GM12878 (cell line): ENCODE measurements at regions of chr21 and their contacts with region 1.

Region 1: GRCh38 chr21:14454016-14455009 is 71.4 kb upstream of the HSPA13 start:
- DNase-seq: peak; percentile 69
- ATAC-seq: peak; percentile 82
- H3K4me3 ChIP-seq: 0 out of 2 replicates have a peak overlapping the region, but pooled peaks have one; percentile 13
- H3K27ac ChIP-seq: peak overlapping the region; percentile 96
- H3K4me1 ChIP-seq: peaks cover 34% of the 10 kb centered on the region
- H3K27me3 ChIP-seq: no peaks in the 10 kb centered on the region
- CTCF ChIP-seq: no peak
- EP300 ChIP-seq: peak in 1 of 2 experiments; percentile 35; a peak in 2 of 4 replicates
- POLR2A ChIP-seq: 0 out of 2 replicates have a peak, but pooled peaks have one; percentile 20
- RAD21 ChIP-seq: no peak

Region 2: DNA sequence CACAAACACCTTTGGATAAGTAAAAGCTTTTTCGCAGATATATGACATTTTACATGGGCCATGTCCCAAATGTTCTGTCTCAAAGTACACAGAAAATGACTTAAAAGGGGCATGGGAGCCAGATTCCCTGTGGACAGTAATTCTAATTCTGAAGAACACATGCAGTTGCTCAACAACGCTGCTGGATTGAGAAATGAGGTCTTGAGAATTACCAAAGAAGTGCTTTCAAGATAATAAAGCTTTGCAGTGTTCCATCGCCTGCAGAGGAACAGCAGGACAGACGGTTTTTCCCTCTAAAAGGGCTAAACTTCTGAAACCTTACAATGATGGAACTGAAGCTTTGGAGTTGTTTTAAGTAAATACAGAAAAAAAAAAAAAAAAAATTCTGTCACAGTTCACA is 16.1 kb before region 1 on chr21:
- CTCF ChIA-PET with region 1: interaction called, 3 read pairs
- POLR2A ChIA-PET with region 1: no interaction called
- RAD21 ChIA-PET with region 1: interaction called, 6 read pairs
- SMC1A ChIA-PET with region 1: interaction called, 13 read pairs
- in situ Hi-C with region 1: no loop called
- intact Hi-C with region 1: no loop called
- DNase-seq: no peak
- ATAC-seq: no peak
- H3K4me3 ChIP-seq: no peak overlapping the region
- H3K27ac ChIP-seq: no peak overlapping the region
- H3K4me1 ChIP-seq: no peaks in the 10 kb centered on the region
- H3K27me3 ChIP-seq: no peaks in the 10 kb centered on the region
- CTCF ChIP-seq: no peak
- EP300 ChIP-seq: no peak
- POLR2A ChIP-seq: no peak
- RAD21 ChIP-seq: no peak

Region 3: DNA sequence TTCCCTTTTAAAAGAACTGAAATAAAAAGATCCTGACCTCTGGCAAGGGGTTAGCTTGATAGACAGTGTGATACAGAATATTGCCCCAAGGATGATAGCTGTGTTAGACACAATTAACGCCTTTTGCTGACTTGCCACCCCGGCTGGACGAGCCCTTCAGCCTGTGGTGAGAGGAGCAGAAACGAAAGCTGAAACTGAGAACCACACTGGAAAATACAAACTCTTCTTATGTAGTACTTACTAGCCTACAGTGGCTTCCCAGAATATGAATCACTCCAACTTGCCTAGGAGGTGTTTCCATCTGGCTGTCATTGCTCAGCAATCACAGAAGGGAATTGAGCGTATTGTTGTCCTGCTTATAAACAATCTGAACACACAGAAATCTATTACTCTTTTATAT is 68.9 kb after region 1 on chr21:
- CTCF ChIA-PET with region 1: interaction called, 9 read pairs
- POLR2A ChIA-PET with region 1: interaction called, 4 read pairs
- RAD21 ChIA-PET with region 1: interaction called, 60 read pairs
- SMC1A ChIA-PET with region 1: interaction called, 75 read pairs
- in situ Hi-C with region 1: no loop called
- intact Hi-C with region 1: no loop called
- DNase-seq: no peak
- ATAC-seq: peak; percentile 87
- H3K4me3 ChIP-seq: peak overlapping the region; percentile 29; the same call in 1 of the 2 replicates
- H3K27ac ChIP-seq: peak overlapping the region; percentile 50
- H3K4me1 ChIP-seq: peaks cover 32% of the 10 kb centered on the region
- H3K27me3 ChIP-seq: no peaks in the 10 kb centered on the region
- CTCF ChIP-seq: no peak
- EP300 ChIP-seq: no peak; a peak in 1 of 4 replicates
- POLR2A ChIP-seq: no peak
- RAD21 ChIP-seq: no peak

Region 4: GRCh38 chr21:14554948-14555347 is 100.6 kb after region 1 on chr21:
- CTCF ChIA-PET with region 1: interaction called, 3 read pairs
- POLR2A ChIA-PET with region 1: interaction called, 5 read pairs
- RAD21 ChIA-PET with region 1: interaction called, 35 read pairs
- SMC1A ChIA-PET with region 1: interaction called, 44 read pairs
- in situ Hi-C with region 1: no loop called
- intact Hi-C with region 1: no loop called
- DNase-seq: no peak
- ATAC-seq: peak; percentile 28; the same call in 1 of the 3 replicates
- H3K4me3 ChIP-seq: no peak overlapping the region
- H3K27ac ChIP-seq: no peak overlapping the region
- H3K4me1 ChIP-seq: peaks cover 19% of the 10 kb centered on the region
- H3K27me3 ChIP-seq: no peaks in the 10 kb centered on the region
- CTCF ChIP-seq: no peak
- EP300 ChIP-seq: no peak
- POLR2A ChIP-seq: no peak
- RAD21 ChIP-seq: no peak

Region 5: GRCh38 chr21:14602382-14602958 is 148.2 kb after region 1 on chr21:
- CTCF ChIA-PET with region 1: no interaction called
- POLR2A ChIA-PET with region 1: no interaction called
- RAD21 ChIA-PET with region 1: interaction called, 4 read pairs
- SMC1A ChIA-PET with region 1: interaction called, 15 read pairs
- in situ Hi-C with region 1: no loop called
- intact Hi-C with region 1: no loop called
- DNase-seq: no peak
- ATAC-seq: peak; percentile 90
- H3K4me3 ChIP-seq: peak overlapping the region; percentile 18; the same call in 1 of the 2 replicates
- H3K27ac ChIP-seq: no peak overlapping the region
- H3K4me1 ChIP-seq: peaks cover 3% of the 10 kb centered on the region; the same call in 1 of the 2 replicates
- H3K27me3 ChIP-seq: no peaks in the 10 kb centered on the region
- CTCF ChIP-seq: no peak
- EP300 ChIP-seq: no peak
- POLR2A ChIP-seq: no peak
- RAD21 ChIP-seq: no peak

Region 6: DNA sequence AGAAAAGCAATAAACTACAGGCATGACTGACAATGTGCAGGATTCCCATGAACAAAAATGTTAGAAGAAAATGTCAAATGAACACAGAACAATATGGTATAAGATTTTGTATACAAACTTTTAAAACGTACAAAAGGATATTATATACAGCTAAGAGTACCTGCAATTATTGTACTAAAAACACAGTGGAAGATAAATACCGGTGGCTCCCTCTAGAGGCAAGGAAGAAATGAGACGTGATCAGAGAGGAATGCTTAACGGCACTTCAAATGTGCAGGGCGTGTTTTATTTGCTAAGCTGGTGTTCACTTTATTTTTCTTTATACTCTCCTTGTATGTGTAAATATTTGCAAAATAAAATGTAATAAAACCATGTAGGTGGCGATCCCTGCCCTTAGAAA is 283.6 kb after region 1 on chr21:
- CTCF ChIA-PET with region 1: interaction called, 46 read pairs
- POLR2A ChIA-PET with region 1: interaction called, 4 read pairs
- RAD21 ChIA-PET with region 1: interaction called, 61 read pairs
- SMC1A ChIA-PET with region 1: interaction called, 93 read pairs
- in situ Hi-C with region 1: no loop called
- intact Hi-C with region 1: loop called (anchors 1 kb)
- DNase-seq: no peak
- ATAC-seq: peak; percentile 81
- H3K4me3 ChIP-seq: no peak overlapping the region
- H3K27ac ChIP-seq: peak overlapping the region; percentile 20; the same call in 1 of the 2 replicates
- H3K4me1 ChIP-seq: peaks cover 23% of the 10 kb centered on the region
- H3K27me3 ChIP-seq: no peaks in the 10 kb centered on the region
- CTCF ChIP-seq: peak; percentile 51 to 65 (median 61)
- EP300 ChIP-seq: no peak
- POLR2A ChIP-seq: no peak
- RAD21 ChIP-seq: peak; percentile 86

Region 7: DNA sequence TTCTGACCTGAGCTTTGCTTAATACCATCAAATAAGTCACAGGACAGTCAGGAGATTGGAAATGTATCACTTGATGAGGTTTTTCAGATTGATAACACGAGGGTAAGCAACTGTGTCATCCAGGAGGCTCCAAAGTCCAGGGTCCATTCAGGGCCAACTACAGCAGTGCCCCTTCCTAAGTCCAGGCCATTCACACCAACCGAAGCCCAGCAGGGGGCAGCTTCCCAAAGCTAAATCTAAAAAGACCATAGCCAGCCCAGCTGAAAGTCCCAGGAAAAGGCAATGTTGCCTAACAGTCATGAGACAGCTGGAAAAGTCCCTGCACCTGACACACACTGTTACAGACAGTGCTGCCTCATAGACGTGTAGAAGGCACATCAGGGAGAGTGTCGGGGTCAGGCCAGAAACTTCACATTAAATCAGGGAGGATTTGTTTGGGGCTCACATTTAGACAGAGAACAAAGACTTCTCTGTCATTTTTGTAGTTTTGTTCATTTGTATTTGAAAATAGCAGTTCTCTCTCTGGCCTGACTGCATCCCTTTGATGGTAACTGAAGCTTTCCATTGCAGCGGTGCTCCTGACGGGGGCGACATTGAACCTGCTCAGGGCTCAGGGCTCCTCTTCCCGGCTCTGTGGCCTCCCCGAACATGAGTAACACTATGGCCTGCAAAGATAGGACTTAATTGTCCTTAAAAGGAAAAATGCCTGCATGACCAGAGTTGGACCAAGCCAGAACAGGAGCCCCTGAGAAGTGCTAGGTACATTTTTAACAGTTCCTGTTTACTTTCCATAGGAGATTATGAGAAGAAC is 410.1 kb after region 1 on chr21:
- CTCF ChIA-PET with region 1: interaction called, 3 read pairs
- POLR2A ChIA-PET with region 1: no interaction called
- RAD21 ChIA-PET with region 1: interaction called, 3 read pairs
- SMC1A ChIA-PET with region 1: interaction called, 3 read pairs
- in situ Hi-C with region 1: no loop called
- intact Hi-C with region 1: loop called (anchors 5 kb)
- DNase-seq: no peak
- ATAC-seq: peak; percentile 95
- H3K4me3 ChIP-seq: no peak overlapping the region
- H3K27ac ChIP-seq: peak overlapping the region; percentile 40
- H3K4me1 ChIP-seq: peaks cover 13% of the 10 kb centered on the region
- H3K27me3 ChIP-seq: no peaks in the 10 kb centered on the region
- CTCF ChIP-seq: peak; percentile 87 to 89 (median 87)
- EP300 ChIP-seq: peak in 1 of 2 experiments; percentile 44; a peak in 1 of 4 replicates
- POLR2A ChIP-seq: no peak
- RAD21 ChIP-seq: peak; percentile 95

Region 8: DNA sequence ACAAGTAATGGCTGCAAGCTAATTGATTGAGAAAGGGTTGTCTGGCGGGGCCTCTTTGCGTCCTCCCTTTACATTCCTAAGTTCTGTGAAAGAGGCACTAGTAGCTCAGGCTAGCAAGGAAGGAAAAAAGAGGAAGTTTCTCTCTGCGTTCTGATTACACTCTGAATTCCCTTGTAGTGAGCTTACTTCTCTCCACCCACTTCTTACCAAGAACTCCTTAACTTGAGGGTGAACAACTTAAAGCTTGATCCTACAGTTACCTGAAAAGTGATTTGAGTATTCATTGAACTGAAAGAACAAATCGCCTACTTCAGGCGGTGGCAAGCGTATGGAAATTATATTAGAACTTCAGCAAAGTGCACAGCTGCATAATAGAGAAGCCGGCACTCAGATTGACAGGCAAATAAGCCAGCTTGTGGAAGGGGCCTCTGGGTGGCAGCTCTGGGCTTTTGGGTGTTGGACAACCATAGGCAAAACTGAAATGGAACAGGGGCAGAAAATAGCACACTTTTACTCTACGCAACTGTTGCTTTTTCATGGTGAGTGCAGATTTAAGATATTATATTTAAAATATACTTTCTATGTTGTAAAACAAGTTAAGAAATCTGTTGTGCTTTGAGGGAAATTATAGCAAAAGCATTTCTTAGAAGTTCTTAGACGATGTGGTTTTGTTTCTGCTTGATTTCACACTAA is 1739.9 kb after region 1 on chr21:
- CTCF ChIA-PET with region 1: no interaction called
- POLR2A ChIA-PET with region 1: no interaction called
- RAD21 ChIA-PET with region 1: no interaction called
- SMC1A ChIA-PET with region 1: no interaction called
- in situ Hi-C with region 1: no loop called
- intact Hi-C with region 1: no loop called
- DNase-seq: no peak
- ATAC-seq: peak; percentile 76
- H3K4me3 ChIP-seq: peak overlapping the region; percentile 41; the same call in 1 of the 2 replicates
- H3K27ac ChIP-seq: peak overlapping the region; percentile 28
- H3K4me1 ChIP-seq: no peaks in the 10 kb centered on the region
- H3K27me3 ChIP-seq: no peaks in the 10 kb centered on the region
- CTCF ChIP-seq: peak in 2 of 3 experiments; percentile 12 to 30; a peak in 2 of 6 replicates
- EP300 ChIP-seq: no peak
- POLR2A ChIP-seq: no peak
- RAD21 ChIP-seq: peak; percentile 61